Activated CD4-positive, alpha-beta memory T cell treated with anti-CD3 and anti-CD28 coated beads for 36 hours (primary cell): ENCODE measurements at regions of chr11 and their contacts with region 1.

Region 1: GRCh38 chr11:126989942-126990715 is 10.4 kb downstream of the KIRREL3 start:
- DNase-seq: peak; percentile 68
- H3K4me3 Mint-ChIP-seq: no peak overlapping the region
- H3K27ac Mint-ChIP-seq: no peak overlapping the region
- H3K4me1 Mint-ChIP-seq: no peaks in the 10 kb centered on the region
- H3K27me3 Mint-ChIP-seq: peaks cover 12% of the 10 kb centered on the region

Region 2: DNA sequence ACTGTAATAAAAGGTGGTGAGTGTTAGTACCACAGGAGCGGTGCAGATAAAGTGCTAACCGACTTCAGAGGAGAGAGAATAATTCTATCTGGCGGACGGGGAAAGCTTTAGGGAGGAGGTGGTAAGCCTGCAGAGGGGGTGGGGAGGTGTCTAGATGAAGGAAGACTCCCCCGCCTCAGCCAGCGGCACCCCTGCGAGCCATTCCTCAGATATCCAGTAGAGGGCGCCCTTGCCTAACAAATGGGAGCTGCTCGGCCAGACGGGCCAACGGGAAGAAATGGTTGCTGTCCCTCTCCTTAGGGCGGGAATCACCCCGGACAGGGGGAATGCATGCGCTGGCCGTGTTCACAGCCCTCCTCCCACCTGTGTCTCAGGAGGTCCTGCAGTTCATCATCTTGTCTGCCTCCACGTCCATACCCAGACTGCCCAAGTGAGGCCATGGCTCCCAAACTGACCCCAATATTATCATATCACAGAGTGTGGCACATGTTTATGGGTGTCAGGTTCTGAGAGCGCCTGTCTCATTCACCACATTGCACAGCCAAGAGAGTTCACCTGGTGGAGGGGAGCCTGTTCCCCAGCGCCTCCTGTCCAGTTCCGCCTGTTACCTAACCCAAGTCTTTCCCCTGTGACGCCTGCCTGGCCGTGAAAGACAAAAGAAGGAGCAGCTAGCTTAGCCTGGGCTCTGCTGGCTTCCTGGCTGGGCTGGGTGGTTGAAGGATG is 549.2 kb before region 1 on chr11:
- CTCF ChIA-PET with region 1: interaction called, 16 read pairs
- POLR2A ChIA-PET with region 1: no interaction called
- intact Hi-C with region 1: loop called (anchors 1 kb)
- DNase-seq: peak; percentile 81
- H3K4me3 Mint-ChIP-seq: no peak overlapping the region
- H3K27ac Mint-ChIP-seq: no peak overlapping the region
- H3K4me1 Mint-ChIP-seq: no peaks in the 10 kb centered on the region
- H3K27me3 Mint-ChIP-seq: peaks cover 12% of the 10 kb centered on the region

Region 3: GRCh38 chr11:126716456-126717083 is 273.6 kb before region 1 on chr11:
- CTCF ChIA-PET with region 1: interaction called, 30 read pairs
- POLR2A ChIA-PET with region 1: no interaction called
- intact Hi-C with region 1: loop called (anchors 1 kb)
- DNase-seq: peak; percentile 43
- H3K4me3 Mint-ChIP-seq: no peak overlapping the region
- H3K27ac Mint-ChIP-seq: no peak overlapping the region
- H3K4me1 Mint-ChIP-seq: no peaks in the 10 kb centered on the region
- H3K27me3 Mint-ChIP-seq: peaks cover 11% of the 10 kb centered on the region

Region 4: GRCh38 chr11:126853732-126854131 is 136.4 kb before region 1 on chr11:
- CTCF ChIA-PET with region 1: no interaction called
- POLR2A ChIA-PET with region 1: no interaction called
- intact Hi-C with region 1: no loop called
- DNase-seq: no peak
- H3K4me3 Mint-ChIP-seq: no peak overlapping the region
- H3K27ac Mint-ChIP-seq: no peak overlapping the region
- H3K4me1 Mint-ChIP-seq: no peaks in the 10 kb centered on the region
- H3K27me3 Mint-ChIP-seq: no peaks in the 10 kb centered on the region